Activated CD4-positive, alpha-beta T cell treated with anti-CD3 and anti-CD28 coated beads for 36 hours (primary cell): ENCODE measurements at regions of chr1 and their contacts with region 1.

Region 1: GRCh38 chr1:40462956-40463590 is 12.8 kb downstream of the ZFP69B start:
- DNase-seq: no peak
- ATAC-seq: no peak
- H3K4me3 Mint-ChIP-seq: no peak overlapping the region
- H3K27ac Mint-ChIP-seq: no peak overlapping the region
- H3K4me1 Mint-ChIP-seq: no peaks in the 10 kb centered on the region
- H3K27me3 Mint-ChIP-seq: no peaks in the 10 kb centered on the region

Region 2: DNA sequence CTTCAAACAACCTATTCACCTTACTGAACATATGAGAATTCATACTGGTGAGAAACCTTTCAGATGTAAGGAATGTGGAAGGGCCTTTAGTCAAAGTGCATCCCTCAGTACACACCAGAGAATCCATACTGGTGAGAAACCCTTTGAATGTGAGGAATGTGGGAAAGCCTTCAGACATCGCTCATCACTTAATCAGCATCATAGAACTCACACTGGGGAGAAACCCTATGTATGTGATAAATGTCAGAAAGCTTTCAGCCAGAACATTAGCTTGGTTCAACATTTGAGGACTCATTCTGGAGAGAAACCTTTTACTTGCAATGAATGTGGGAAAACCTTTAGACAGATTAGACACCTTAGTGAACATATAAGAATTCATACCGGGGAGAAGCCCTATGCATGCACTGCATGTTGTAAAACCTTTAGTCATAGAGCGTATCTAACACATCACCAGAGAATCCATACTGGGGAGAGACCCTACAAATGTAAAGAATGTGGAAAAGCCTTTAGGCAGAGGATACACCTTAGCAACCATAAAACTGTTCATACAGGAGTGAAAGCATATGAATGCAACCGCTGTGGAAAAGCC is 32.3 kb after region 1 on chr1:
- CTCF ChIA-PET with region 1: no interaction called
- POLR2A ChIA-PET with region 1: no interaction called
- intact Hi-C with region 1: loop called in 1 of 2 experiments (anchors 2 kb)
- DNase-seq: no peak
- ATAC-seq: no peak
- H3K4me3 Mint-ChIP-seq: no peak overlapping the region
- H3K27ac Mint-ChIP-seq: no peak overlapping the region
- H3K4me1 Mint-ChIP-seq: peaks cover 5% of the 10 kb centered on the region
- H3K27me3 Mint-ChIP-seq: no peaks in the 10 kb centered on the region